ENCODE measurements at regions of chr2 and their contacts with region 1.

Region 1: GRCh38 chr2:134623796-134624195 is 95.0 kb downstream of the TMEM163 start:
- DNase-seq: peak; percentile 11
- H3K4me3 Mint-ChIP-seq: no peak overlapping the region
- H3K27ac Mint-ChIP-seq: no peak overlapping the region
- H3K4me1 Mint-ChIP-seq: peaks cover 13% of the 10 kb centered on the region
- H3K27me3 Mint-ChIP-seq: peaks cover 5% of the 10 kb centered on the region

Region 2: GRCh38 chr2:134019871-134020270 is 603.9 kb before region 1 on chr2:
- intact Hi-C with region 1: loop called (anchors 5 kb)
- DNase-seq: no peak
- H3K4me3 Mint-ChIP-seq: no peak overlapping the region
- H3K27ac Mint-ChIP-seq: no peak overlapping the region
- H3K4me1 Mint-ChIP-seq: no peaks in the 10 kb centered on the region
- H3K27me3 Mint-ChIP-seq: peaks cover 3% of the 10 kb centered on the region

Region 3: DNA sequence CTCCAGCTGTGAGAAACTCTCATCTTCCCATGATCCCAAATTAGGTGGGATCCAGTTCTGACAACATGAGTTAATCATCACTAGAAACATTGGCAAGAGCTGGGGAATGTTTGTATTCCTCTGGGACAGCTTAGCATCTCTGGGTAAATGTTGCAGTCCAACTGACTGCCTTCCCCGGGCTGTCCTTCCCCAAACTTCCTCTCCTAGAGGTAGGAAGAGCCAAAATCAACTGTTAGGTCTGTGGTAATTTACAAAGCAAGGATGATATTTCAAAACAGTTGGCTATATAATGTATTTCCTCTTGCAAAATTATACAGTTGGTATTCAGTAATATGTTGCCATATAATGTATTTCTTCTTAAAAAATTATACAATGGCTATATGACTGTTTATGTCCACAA is 221.4 kb before region 1 on chr2:
- intact Hi-C with region 1: no loop called
- DNase-seq: no peak
- H3K4me3 Mint-ChIP-seq: no peak overlapping the region
- H3K27ac Mint-ChIP-seq: no peak overlapping the region
- H3K4me1 Mint-ChIP-seq: no peaks in the 10 kb centered on the region
- H3K27me3 Mint-ChIP-seq: peaks cover 6% of the 10 kb centered on the region

Region 4: DNA sequence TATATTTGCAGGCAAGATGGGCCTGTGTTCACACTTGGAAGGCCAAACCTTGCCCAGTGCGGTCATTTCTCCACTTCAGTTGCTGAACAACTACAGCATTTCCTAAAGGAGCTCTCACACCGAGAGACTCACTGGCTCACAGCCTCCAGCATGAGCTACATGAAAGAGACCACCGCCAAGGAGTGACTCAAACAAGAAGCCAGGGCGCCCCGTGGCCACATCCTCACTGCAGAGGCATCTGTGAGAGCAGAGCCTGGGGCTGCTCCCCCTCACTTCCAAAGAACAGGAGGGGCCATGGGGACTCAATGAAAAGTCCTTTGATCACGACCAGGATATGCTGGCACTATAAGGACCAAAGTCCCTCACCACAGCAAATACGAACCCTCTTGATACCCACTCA is 45.0 kb after region 1 on chr2:
- intact Hi-C with region 1: loop called (anchors 5 kb)
- DNase-seq: peak; percentile 76
- H3K4me3 Mint-ChIP-seq: no peak overlapping the region
- H3K27ac Mint-ChIP-seq: peak overlapping the region; percentile 28
- H3K4me1 Mint-ChIP-seq: peaks cover 67% of the 10 kb centered on the region
- H3K27me3 Mint-ChIP-seq: peaks cover 33% of the 10 kb centered on the region